ENCODE measurements at regions of chr2 and their contacts with region 1.

Region 1: DNA sequence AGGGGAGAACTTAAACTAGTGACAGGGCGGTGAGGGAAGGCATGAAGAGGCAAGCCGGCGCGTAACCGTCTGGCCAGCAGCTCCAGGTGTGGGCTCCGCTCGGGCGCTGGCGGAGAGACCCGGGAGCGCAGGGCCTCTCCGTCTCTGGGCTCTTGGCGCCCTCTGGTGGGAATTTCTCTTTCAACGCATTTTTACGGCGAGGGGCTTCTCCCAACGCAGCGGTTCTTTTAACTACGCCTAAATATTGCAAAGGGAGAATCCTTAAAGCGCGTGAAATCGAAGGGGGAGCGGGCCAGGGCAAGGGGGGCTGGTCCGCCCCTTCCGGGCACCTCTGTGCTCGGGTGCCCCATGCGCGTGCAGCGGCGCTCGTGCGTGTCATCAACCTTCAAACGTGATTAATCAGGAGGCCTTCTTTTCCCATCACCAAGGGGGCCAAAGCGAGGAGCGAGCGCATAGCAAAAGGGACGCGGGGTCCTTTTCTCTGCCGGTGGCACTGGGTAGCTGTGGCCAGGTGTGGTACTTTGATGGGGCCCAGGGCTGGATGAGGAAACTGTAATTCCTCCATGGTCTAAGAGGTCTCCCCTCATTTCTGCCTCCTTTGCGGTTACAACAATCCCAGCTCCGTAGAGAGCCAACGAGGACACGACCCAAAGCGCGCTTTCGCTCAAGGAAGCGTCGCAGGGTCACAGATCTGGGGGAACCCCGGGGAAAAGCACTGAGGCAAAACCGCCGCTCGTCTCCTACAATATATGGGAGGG is 762 bp upstream of the GAD1 start:
- DNase-seq: peak; percentile 64
- H3K4me3 ChIP-seq: peak overlapping the region; percentile 24 to 50 (median 48)
- H3K27ac ChIP-seq: no peak overlapping the region
- H3K4me1 ChIP-seq: peaks cover 29% of the 10 kb centered on the region
- H3K27me3 ChIP-seq: peaks cover 46% of the 10 kb centered on the region
- CTCF ChIP-seq: peak; percentile 44 to 79

Region 2: DNA sequence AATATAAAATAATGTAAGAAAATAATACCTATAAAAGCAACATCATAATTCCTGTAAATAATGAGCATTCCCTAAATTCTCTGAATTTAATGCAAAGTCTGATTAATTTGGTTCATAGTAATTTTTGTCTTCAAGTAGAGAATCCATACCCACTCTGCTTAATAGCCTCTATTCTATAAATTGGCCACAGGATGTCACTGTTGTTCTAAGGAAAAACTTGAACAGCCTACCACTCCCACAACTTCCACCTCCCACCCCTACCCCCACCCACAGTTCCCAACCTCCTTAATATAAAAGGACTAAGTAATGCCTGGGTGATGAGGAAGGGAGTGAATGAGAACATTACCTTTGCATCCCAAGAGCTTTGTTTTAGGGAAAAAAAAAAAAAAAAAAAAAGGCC is 1363.8 kb before region 1 on chr2:
- CTCF ChIA-PET with region 1: no interaction called
- dilution Hi-C with region 1: no loop called
- in situ Hi-C with region 1: no loop called
- intact Hi-C with region 1: loop called (anchors 5 kb)
- DNase-seq: peak; percentile 5
- H3K4me3 ChIP-seq: no peak overlapping the region
- H3K27ac ChIP-seq: no peak overlapping the region
- H3K4me1 ChIP-seq: no peaks in the 10 kb centered on the region
- H3K27me3 ChIP-seq: no peaks in the 10 kb centered on the region
- CTCF ChIP-seq: peak; percentile 32 to 52

Region 3: GRCh38 chr2:170324640-170325046 is 491.3 kb before region 1 on chr2:
- CTCF ChIA-PET with region 1: no interaction called
- dilution Hi-C with region 1: no loop called
- in situ Hi-C with region 1: no loop called
- intact Hi-C with region 1: loop called (anchors 1 kb)
- DNase-seq: peak; percentile 39
- H3K4me3 ChIP-seq: no peak overlapping the region
- H3K27ac ChIP-seq: no peak overlapping the region
- H3K4me1 ChIP-seq: no peaks in the 10 kb centered on the region
- H3K27me3 ChIP-seq: no peaks in the 10 kb centered on the region
- CTCF ChIP-seq: peak; percentile 80 to 91

Region 4: GRCh38 chr2:170409164-170409535 is 406.8 kb before region 1 on chr2:
- CTCF ChIA-PET with region 1: no interaction called
- dilution Hi-C with region 1: no loop called
- in situ Hi-C with region 1: loop called in 1 of 2 experiments (anchors 10 kb)
- intact Hi-C with region 1: loop called (anchors 1 kb)
- DNase-seq: peak; percentile 50
- H3K4me3 ChIP-seq: no peak overlapping the region
- H3K27ac ChIP-seq: no peak overlapping the region
- H3K4me1 ChIP-seq: no peaks in the 10 kb centered on the region
- H3K27me3 ChIP-seq: peaks cover 4% of the 10 kb centered on the region
- CTCF ChIP-seq: peak; percentile 77 to 80

Region 5: DNA sequence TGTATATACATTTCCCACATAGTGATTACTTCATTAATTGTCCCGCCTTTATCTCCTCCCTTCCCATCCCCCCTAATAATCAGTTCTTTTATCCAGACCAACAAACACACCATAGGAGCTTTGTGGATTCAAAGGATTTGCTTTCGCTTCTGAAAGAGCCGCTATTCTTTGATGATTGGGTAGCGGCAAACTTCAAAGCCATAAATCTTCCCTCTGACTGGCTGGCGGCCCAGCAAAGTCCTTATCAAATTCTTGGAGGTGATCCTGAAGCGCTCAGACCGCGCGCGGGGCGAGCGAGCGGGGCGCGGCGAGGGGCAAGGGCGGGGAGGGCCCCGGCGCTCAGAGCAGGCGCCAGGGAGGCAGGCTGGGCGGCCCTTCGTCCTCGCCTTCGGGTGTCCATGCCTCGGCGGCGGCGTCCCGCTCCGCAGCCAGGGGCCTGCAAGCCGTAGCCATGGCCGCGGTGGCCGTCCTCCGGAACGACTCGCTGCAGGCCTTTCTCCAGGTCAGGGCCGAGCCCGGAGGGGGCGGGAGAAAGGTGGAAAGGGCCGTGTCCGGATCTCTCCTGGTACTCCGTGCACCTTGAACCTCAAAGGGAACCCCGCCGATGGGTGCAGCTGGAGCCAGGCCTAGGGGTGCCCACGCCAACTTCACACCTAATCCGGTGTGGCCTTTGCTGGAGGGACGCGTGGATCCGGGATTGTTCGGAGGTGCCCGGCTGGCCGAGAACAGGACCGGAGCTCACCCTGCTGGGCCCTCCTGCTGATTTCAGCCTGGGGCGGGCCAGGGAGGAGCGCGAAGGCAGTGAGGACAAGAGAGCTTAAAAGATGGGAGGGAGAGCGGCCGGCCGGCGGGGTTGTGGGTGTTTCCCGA is 100.6 kb before region 1 on chr2 and contains the start of gene SP5:
- CTCF ChIA-PET with region 1: no interaction called
- dilution Hi-C with region 1: no loop called
- in situ Hi-C with region 1: no loop called
- intact Hi-C with region 1: loop called (anchors 5 kb)
- DNase-seq: no peak
- H3K4me3 ChIP-seq: peak within 1 kb of the TSS; percentile 39 to 57 (median 40)
- H3K27ac ChIP-seq: no peak within 1 kb of the TSS
- H3K4me1 ChIP-seq: peaks cover 31% of the 10 kb centered on the region
- H3K27me3 ChIP-seq: peaks cover 68% of the 10 kb centered on the region
- CTCF ChIP-seq: no peak
- total RNA-seq, gene SP5: not detected

Region 6: GRCh38 chr2:170873035-170873692 is 57.2 kb after region 1 on chr2:
- CTCF ChIA-PET with region 1: no interaction called
- dilution Hi-C with region 1: no loop called
- in situ Hi-C with region 1: no loop called
- intact Hi-C with region 1: loop called (anchors 1 kb)
- DNase-seq: peak; percentile 58
- H3K4me3 ChIP-seq: peak overlapping the region in 1 of 3 experiments; percentile 12
- H3K27ac ChIP-seq: no peak overlapping the region
- H3K4me1 ChIP-seq: peaks cover 15% of the 10 kb centered on the region
- H3K27me3 ChIP-seq: peaks cover 2% of the 10 kb centered on the region
- CTCF ChIP-seq: peak; percentile 94 to 96

Region 7: GRCh38 chr2:171160119-171160955 is 344.4 kb after region 1 on chr2 and contains the start of gene TLK1:
- CTCF ChIA-PET with region 1: no interaction called
- dilution Hi-C with region 1: no loop called
- in situ Hi-C with region 1: no loop called
- intact Hi-C with region 1: no loop called
- DNase-seq: peak; percentile 75
- H3K4me3 ChIP-seq: peak within 1 kb of the TSS; percentile 83 to 97 (median 93)
- H3K27ac ChIP-seq: peak within 1 kb of the TSS; percentile 72
- H3K4me1 ChIP-seq: no peaks in the 10 kb centered on the region
- H3K27me3 ChIP-seq: no peaks in the 10 kb centered on the region
- CTCF ChIP-seq: peak in 1 of 2 donors; percentile 26
- total RNA-seq, gene TLK1: 15.8 to 60.1 TPM

Region 8: DNA sequence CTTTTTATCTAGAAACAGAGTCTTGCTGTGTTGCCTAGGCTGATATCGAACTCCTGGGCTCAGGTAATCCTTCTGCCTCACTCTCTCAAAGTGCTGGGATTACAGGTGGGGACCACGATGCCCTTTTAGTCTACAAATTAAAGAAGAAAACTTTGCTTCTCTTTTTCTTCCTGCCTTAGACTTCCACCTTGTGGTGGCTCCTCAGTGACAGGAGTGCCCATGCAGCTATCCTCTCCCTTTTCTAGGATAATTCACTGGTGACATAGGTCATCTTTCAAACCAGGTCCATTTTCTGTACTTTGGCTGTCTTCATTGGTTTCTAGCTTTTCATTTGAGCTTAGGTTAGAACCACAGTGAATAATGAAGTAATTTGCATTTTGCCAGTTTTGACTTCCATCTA is 631.8 kb after region 1 on chr2:
- CTCF ChIA-PET with region 1: no interaction called
- dilution Hi-C with region 1: no loop called
- in situ Hi-C with region 1: no loop called
- intact Hi-C with region 1: no loop called
- DNase-seq: no peak
- H3K4me3 ChIP-seq: no peak overlapping the region
- H3K27ac ChIP-seq: no peak overlapping the region
- H3K4me1 ChIP-seq: no peaks in the 10 kb centered on the region
- H3K27me3 ChIP-seq: no peaks in the 10 kb centered on the region
- CTCF ChIP-seq: no peak